ENCODE measurements at regions of chr12 and their contacts with region 1.

Region 1: DNA sequence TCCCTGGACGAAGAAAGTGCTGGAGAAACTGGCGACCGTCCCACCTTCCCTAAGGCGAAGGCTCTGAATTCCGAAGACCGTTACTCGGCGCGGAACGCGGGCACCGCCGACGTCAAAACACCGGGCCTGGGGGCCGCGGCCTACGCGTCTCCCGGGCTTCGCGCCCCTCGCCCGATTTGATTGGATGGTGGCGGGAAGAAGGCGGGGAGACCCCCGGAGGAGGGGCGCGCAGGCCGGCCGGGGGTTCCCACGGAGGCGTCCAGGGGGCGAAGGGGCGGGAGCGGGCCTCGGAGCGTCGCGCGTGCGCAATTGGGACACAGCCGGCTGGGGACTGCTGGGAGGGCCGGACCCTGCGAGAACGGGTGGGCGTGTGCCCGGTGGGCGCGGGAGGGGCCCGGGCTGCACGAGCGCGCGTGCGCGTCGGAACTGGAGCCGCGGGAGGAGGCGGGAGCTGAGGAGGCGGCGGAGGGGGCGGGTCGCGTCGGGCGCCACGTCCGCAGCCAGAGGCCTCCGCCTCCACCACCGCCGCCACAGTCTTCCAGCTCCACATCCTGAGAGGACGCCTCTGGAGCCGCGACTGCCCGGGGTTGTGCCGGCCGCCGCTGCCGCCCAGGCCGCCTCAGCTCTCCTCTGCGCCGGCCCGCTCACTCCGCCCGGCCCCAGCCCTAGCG is at the start of gene TMEM263:
- DNase-seq: peak; percentile 97
- H3K4me3 Mint-ChIP-seq: peak within 1 kb of the TSS; percentile 97
- H3K27ac Mint-ChIP-seq: peak within 1 kb of the TSS; percentile 97
- H3K4me1 Mint-ChIP-seq: peaks cover 24% of the 10 kb centered on the region
- H3K27me3 Mint-ChIP-seq: peaks cover 13% of the 10 kb centered on the region
- total RNA-seq, gene TMEM263: 24.8 and 26.6 TPM in 2 replicates

Region 2: GRCh38 chr12:106302401-106303201 is 652.9 kb before region 1 on chr12 and contains the start of gene TCP11L2:
- intact Hi-C with region 1: loop called (anchors 5 kb)
- DNase-seq: peak; percentile 97
- H3K4me3 Mint-ChIP-seq: peak within 1 kb of the TSS; percentile 97
- H3K27ac Mint-ChIP-seq: peak within 1 kb of the TSS; percentile 100
- H3K4me1 Mint-ChIP-seq: peaks cover 38% of the 10 kb centered on the region
- H3K27me3 Mint-ChIP-seq: no peaks in the 10 kb centered on the region
- total RNA-seq, gene TCP11L2: 3.2 and 4.5 TPM in 2 replicates

Region 3: DNA sequence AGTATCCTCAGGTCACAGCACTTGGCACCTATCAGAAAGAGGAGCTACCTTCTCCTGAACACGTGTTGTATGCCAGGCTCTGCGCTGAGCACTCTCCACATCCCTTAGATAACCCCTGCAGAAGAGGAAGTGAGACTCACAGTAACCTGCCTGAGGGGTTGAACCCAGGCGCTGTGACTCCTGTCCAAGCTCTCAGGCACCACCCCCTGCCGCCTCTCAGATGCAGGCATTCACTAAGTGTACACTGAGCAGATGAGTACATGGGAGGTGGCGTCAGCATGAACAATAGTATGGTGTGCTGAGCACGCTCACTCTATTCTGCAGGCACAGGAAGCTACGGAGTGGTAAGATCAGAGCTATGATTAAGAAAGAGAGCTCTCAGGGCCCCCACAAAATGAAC is 202.0 kb before region 1 on chr12:
- intact Hi-C with region 1: no loop called
- DNase-seq: peak; percentile 80
- H3K4me3 Mint-ChIP-seq: peak overlapping the region; percentile 17
- H3K27ac Mint-ChIP-seq: peak overlapping the region; percentile 73
- H3K4me1 Mint-ChIP-seq: peaks cover 12% of the 10 kb centered on the region
- H3K27me3 Mint-ChIP-seq: no peaks in the 10 kb centered on the region

Region 4: GRCh38 chr12:106774005-106774807 is 181.3 kb before region 1 on chr12 and contains the start of gene RIC8B:
- intact Hi-C with region 1: loop called (anchors 1 kb)
- DNase-seq: peak; percentile 95
- H3K4me3 Mint-ChIP-seq: peak within 1 kb of the TSS; percentile 98
- H3K27ac Mint-ChIP-seq: peak within 1 kb of the TSS; percentile 96
- H3K4me1 Mint-ChIP-seq: peaks cover 32% of the 10 kb centered on the region
- H3K27me3 Mint-ChIP-seq: peaks cover 2% of the 10 kb centered on the region
- total RNA-seq, gene RIC8B: 13.6 and 14.9 TPM in 2 replicates

Region 5: DNA sequence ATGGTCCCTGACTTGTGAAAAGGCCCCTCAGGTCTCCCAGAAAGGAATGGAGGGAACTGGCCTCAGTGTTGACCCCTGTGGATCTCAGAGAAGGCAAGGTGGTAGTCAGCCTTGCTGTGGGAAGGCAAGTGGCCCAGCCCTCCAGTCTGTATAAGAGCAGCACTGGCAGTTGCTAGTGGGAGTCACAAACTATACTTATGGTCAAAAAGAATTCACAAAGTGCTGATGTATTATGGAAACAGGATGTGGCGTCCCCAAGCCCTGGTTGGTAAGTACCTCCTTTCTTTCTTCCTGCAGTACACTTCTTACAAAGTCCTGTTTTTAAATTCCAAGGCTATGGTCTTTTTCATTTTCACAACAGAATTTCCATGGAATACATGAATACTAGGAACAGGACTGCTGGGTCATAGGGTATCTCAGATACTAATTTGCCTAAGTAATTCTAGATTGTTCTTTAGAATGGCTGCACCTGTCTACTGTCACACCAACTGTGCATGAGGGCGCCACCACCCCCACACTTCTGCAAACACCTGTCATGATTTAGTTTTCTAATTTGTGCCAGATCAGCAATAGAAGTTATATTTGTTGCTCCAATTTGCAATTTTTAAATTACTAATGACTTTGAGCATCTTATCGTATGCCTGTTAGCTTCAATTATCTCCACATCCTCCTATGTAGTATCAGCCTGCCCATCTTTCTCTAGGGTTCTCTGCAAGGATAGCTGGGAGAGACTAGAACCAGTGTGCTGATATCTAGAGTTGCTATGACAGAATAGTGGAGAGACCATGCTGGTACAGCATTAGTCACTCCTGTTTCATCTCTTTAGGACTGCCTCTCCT is 40.5 kb before region 1 on chr12:
- intact Hi-C with region 1: loop called (anchors 2 kb)
- DNase-seq: peak; percentile 79
- H3K4me3 Mint-ChIP-seq: peak overlapping the region; percentile 32
- H3K27ac Mint-ChIP-seq: peak overlapping the region; percentile 86
- H3K4me1 Mint-ChIP-seq: peaks cover 33% of the 10 kb centered on the region
- H3K27me3 Mint-ChIP-seq: peaks cover 5% of the 10 kb centered on the region

Region 6: DNA sequence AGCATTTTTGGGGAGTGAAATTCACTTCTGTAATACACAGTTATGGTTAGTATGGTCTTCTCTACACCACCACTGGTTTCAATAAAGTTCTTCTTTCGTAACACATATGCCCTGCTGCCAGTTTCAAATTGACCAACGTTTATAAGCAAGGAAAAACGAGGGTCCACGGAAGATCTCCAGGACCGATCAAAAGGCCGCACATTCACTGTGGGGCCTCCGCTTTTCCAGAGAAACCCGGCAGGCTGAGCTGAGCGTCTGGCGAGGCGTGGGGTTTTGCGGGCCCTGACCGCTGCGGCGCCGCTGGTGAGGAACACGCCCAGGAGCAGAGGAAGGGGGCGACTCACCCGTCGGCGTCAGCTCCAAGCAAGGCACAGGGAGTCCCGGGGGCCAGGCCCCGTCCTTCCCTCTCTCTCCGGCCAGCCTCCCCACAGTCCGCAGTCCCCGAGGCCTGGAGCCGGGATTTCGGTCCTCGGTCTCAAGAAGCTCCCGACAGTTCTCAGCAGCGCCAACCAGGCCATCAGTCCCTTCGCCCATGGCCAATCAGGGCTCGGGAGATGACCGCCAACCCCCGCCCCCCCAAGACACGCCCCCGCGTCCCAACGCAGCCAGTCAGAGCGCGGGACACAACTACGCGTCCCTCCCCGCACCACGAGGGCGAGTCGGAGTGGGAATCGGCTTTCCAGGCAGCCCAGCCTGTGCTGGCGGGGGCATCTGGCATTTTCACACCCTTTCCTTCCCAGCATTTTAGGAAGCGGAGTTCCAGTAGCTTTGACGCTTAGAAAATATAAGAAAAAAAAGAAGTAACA is 31.3 kb after region 1 on chr12 and contains the start of gene MTERF2:
- intact Hi-C with region 1: loop called (anchors 1 kb)
- DNase-seq: peak; percentile 93
- H3K4me3 Mint-ChIP-seq: peak within 1 kb of the TSS; percentile 93
- H3K27ac Mint-ChIP-seq: peak within 1 kb of the TSS; percentile 81
- H3K4me1 Mint-ChIP-seq: peaks cover 32% of the 10 kb centered on the region
- H3K27me3 Mint-ChIP-seq: no peaks in the 10 kb centered on the region
- total RNA-seq, gene MTERF2: 3.1 and 4.3 TPM in 2 replicates

Region 7: DNA sequence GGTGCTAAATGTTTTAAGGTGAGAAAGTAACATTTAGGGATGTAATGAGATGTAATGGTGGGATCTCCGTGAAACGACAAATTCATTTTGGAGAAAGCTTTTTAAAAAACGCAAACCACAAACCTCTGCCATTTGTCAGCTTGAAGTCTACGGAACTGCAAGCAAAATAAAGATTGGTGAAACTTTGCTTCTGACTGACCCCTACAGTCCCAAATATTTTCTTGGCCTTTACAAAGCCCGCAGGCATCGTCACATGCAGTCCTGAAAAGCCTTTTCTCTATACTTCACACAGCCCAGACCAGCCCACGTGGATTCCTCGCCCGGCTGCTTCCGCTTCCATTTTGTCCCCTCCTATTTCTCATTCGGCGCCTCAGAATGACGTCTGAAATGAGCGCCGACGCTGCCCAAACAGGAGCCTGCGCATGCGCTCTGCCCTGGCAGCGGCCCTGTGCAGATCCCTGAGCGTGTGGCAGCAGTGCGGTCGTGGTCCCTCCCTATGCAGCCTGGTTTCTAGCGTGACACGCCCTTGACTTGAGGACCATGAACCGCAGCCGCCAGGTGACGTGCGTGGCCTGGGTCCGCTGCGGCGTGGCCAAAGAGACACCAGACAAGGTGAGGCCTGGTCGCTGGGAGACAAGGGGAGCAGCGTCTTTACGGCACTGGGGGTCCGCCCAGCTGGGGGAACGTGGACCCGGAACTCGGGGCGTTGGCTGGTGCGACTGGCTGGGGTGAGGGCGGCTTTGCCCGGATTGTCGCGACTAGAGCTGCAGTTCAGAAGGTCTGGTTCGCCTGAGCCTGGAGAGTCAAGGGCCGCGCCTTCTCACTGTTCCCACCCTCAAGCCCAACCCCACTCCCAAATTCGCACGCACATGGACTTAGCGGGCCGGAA is 730.1 kb after region 1 on chr12 and contains the start of gene PWP1:
- intact Hi-C with region 1: loop called (anchors 1 kb)
- DNase-seq: peak; percentile 99
- H3K4me3 Mint-ChIP-seq: peak within 1 kb of the TSS; percentile 93
- H3K27ac Mint-ChIP-seq: peak within 1 kb of the TSS; percentile 92
- H3K4me1 Mint-ChIP-seq: peaks cover 26% of the 10 kb centered on the region
- H3K27me3 Mint-ChIP-seq: peaks cover 2% of the 10 kb centered on the region
- total RNA-seq, gene PWP1: 56.3 and 63.2 TPM in 2 replicates

Measured in activated CD4-positive, alpha-beta T cell treated with anti-CD3 and anti-CD28 coated beads, Interleukin-2, amount 10 ng/mL, durations not matched to agents 24 days and 14 days (primary cell).